Aorta (tissue), 5 donors: ENCODE measurements at regions of chr10 and their contacts with region 1.

Region 1: GRCh38 chr10:102815790-102816549 is 21.2 kb downstream of the CYP17A1 start:
- DNase-seq: peak; percentile 79 to 80
- ATAC-seq: peak; percentile 83
- H3K4me3 ChIP-seq: no peak overlapping the region
- H3K27ac ChIP-seq: peak overlapping the region; percentile 97 to 100
- H3K4me1 ChIP-seq: no peaks in the 10 kb centered on the region
- H3K27me3 ChIP-seq: no peaks in the 10 kb centered on the region

Region 2: GRCh38 chr10:102678842-102679289 is 137.1 kb before region 1 on chr10:
- intact Hi-C with region 1: no loop called
- DNase-seq: peak; percentile 82 to 86
- ATAC-seq: peak; percentile 49
- H3K4me3 ChIP-seq: no peak overlapping the region
- H3K27ac ChIP-seq: no peak overlapping the region
- H3K4me1 ChIP-seq: peaks cover 0 to 3% of the 10 kb centered on the region in 2 donors
- H3K27me3 ChIP-seq: no peaks in the 10 kb centered on the region

Region 3: GRCh38 chr10:102743588-102744373 is 72.2 kb before region 1 on chr10 and contains the start of gene WBP1L:
- intact Hi-C with region 1: loop called in 1 of 2 experiments (anchors 2 kb)
- DNase-seq: peak; percentile 97
- ATAC-seq: peak; percentile 97
- H3K4me3 ChIP-seq: peak within 1 kb of the TSS; percentile 57 to 79
- H3K27ac ChIP-seq: peak within 1 kb of the TSS; percentile 37 to 96
- H3K4me1 ChIP-seq: peaks cover 0 to 3% of the 10 kb centered on the region in 2 donors
- H3K27me3 ChIP-seq: no peaks in the 10 kb centered on the region
- total RNA-seq, gene WBP1L: 81.1 to 84.7 TPM

Region 4: GRCh38 chr10:102752934-102753664 is 62.9 kb before region 1 on chr10:
- intact Hi-C with region 1: loop called in 1 of 2 experiments (anchors 5 kb)
- DNase-seq: no peak
- ATAC-seq: peak; percentile 90
- H3K4me3 ChIP-seq: no peak overlapping the region
- H3K27ac ChIP-seq: peak overlapping the region; percentile 92 to 98
- H3K4me1 ChIP-seq: peaks cover 6 to 8% of the 10 kb centered on the region in 2 donors
- H3K27me3 ChIP-seq: no peaks in the 10 kb centered on the region

Region 5: GRCh38 chr10:102776779-102777456 is 39.1 kb before region 1 on chr10:
- intact Hi-C with region 1: loop called (anchors 5 kb)
- DNase-seq: peak; percentile 87 to 89
- ATAC-seq: peak; percentile 68
- H3K4me3 ChIP-seq: peak overlapping the region; percentile 14 to 38
- H3K27ac ChIP-seq: peak overlapping the region; percentile 97 to 100
- H3K4me1 ChIP-seq: peaks cover 6 to 7% of the 10 kb centered on the region in 2 donors
- H3K27me3 ChIP-seq: no peaks in the 10 kb centered on the region

Region 6: DNA sequence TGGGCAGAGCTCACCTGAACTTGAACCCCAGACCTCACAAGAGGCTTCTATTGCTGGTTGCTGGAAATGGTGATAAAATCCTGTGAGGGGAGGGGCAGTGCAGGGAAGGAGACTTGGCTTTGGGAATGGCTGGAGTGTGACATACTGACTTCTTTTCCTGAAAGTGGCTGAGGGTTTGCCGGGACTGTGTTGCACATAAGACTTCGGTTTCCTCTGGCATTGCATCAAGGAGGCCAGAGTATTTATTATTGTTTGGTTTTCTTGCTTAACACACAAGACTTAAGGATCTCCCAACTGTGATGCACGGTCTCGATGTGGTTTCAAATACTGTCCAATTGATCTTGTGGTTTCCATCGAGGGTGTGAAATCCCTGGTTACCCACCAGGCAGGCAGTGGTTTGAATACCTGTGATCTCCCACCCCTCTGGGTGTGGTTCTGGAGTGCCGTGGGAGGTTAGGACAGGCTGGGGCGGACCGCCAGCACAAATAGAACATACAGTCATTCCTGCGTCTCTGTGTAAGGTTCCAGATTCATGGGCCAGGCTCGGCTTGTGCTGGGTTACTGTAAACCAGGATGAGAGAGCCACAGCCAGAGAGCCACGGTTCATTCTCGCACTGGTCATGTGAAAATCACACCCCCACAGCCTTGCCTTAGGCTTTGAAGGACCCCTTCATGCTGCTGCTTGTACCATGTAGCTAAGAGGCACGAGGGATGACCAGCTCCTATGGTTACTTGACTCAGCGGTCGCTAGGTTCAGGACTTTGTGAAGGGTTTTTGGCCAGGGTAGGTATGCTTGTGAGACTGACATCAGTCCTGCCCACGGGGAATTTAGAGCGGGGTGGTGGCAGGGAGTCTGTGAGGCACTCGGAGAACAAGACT is 33.1 kb before region 1 on chr10:
- intact Hi-C with region 1: loop called (anchors 5 kb)
- DNase-seq: peak; percentile 88 to 91
- ATAC-seq: peak; percentile 83
- H3K4me3 ChIP-seq: no peak overlapping the region
- H3K27ac ChIP-seq: peak overlapping the region; percentile 95 to 96
- H3K4me1 ChIP-seq: peaks cover 7 to 13% of the 10 kb centered on the region in 2 donors
- H3K27me3 ChIP-seq: no peaks in the 10 kb centered on the region

Region 7: GRCh38 chr10:103013416-103013815 is 197.4 kb after region 1 on chr10:
- intact Hi-C with region 1: no loop called
- DNase-seq: no peak
- ATAC-seq: no peak
- H3K4me3 ChIP-seq: no peak overlapping the region
- H3K27ac ChIP-seq: no peak overlapping the region
- H3K4me1 ChIP-seq: peaks cover 0 to 2% of the 10 kb centered on the region in 2 donors
- H3K27me3 ChIP-seq: no peaks in the 10 kb centered on the region